ENCODE measurements at regions of chr1 and their contacts with region 1.

Region 1: DNA sequence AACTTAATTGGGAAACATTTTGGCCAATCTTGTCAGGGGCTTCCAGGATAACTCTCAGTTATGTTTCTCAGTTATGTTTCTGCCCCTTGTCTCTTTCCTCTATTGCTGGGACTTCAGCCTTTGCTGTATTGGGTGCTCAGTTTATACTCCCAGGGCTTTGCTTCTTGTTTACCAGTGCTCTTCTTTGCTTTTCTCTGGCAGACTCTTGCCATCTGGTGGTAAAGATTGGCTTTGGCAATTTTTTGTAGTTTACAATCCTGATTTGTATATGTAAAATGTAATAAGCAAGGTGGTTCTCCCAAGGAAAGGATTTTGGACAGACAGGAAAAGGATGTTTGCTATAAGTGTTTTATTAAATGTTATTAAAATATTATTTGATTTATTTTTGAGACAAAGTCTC is 37.9 kb downstream of the FABP3 start:
- DNase-seq: no peak
- H3K4me3 Mint-ChIP-seq: no peak overlapping the region
- H3K27ac Mint-ChIP-seq: no peak overlapping the region
- H3K4me1 Mint-ChIP-seq: peaks cover 5% of the 10 kb centered on the region
- H3K27me3 Mint-ChIP-seq: no peaks in the 10 kb centered on the region

Region 2: DNA sequence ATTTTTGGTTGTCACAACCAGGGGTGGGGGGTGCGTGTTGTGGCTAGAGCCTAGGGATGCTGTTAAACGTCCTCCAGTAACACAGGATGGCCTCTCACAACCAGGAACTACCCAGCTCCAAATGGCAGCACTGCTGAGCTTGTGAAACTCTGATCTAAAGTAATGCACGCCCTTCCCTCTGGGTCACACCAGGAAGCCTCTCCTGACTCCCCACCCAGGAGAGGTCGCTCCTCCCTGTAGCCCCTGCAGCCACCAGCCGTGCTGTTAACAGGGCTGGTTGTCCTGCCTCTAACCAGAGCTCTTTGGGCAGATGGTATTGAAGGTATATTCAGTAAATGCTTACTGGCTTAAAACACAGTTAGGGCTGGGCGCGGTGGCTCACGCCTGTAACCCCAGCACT is 168.5 kb before region 1 on chr1:
- intact Hi-C with region 1: loop called (anchors 1 kb)
- DNase-seq: no peak
- H3K4me3 Mint-ChIP-seq: no peak overlapping the region
- H3K27ac Mint-ChIP-seq: no peak overlapping the region
- H3K4me1 Mint-ChIP-seq: peaks cover 16% of the 10 kb centered on the region
- H3K27me3 Mint-ChIP-seq: peaks cover 1% of the 10 kb centered on the region

Region 3: DNA sequence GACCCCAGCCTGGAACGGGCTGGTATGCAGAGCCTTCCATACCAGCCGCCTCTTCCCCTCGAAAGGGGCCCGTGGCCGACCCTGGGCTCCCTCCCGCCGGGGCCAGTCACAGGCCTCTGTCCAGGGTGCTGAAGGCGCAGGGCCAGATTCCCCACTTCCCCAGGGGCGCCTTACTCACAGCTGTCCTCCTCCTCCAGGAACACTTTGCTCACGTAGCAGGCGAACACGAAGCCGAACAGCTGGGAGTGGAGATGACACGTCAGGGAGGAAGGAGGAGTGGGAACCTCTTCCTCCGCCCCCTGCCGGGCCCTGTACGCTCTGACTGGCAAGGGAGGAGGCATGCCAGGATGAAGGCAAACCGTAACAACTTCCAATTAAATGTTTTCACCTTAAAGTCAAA is 152.7 kb before region 1 on chr1:
- intact Hi-C with region 1: loop called (anchors 1 kb)
- DNase-seq: peak; percentile 37
- H3K4me3 Mint-ChIP-seq: peak overlapping the region; percentile 22
- H3K27ac Mint-ChIP-seq: no peak overlapping the region
- H3K4me1 Mint-ChIP-seq: no peaks in the 10 kb centered on the region
- H3K27me3 Mint-ChIP-seq: peaks cover 22% of the 10 kb centered on the region

Region 4: DNA sequence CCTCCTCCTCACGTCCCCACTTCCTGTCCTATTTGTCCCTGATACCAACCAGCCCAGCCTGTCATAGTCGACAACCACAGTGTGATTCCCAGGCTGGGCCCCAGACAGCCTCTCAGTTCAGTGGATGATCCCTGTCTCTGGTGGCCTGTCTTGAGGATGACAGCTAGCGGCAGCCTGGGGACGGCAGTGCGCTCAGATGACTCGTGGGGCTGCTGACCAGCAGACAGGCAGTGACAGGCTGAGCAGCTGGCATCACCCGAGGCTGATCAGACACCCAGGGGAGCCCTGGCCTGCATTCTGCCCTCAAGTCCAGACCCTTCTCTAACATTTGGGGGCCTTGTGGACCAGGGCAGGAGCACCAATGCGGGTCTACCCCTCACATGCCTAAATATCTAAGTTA is 116.3 kb before region 1 on chr1:
- intact Hi-C with region 1: no loop called
- DNase-seq: no peak
- H3K4me3 Mint-ChIP-seq: no peak overlapping the region
- H3K27ac Mint-ChIP-seq: no peak overlapping the region
- H3K4me1 Mint-ChIP-seq: no peaks in the 10 kb centered on the region
- H3K27me3 Mint-ChIP-seq: peaks cover 2% of the 10 kb centered on the region

Region 5: DNA sequence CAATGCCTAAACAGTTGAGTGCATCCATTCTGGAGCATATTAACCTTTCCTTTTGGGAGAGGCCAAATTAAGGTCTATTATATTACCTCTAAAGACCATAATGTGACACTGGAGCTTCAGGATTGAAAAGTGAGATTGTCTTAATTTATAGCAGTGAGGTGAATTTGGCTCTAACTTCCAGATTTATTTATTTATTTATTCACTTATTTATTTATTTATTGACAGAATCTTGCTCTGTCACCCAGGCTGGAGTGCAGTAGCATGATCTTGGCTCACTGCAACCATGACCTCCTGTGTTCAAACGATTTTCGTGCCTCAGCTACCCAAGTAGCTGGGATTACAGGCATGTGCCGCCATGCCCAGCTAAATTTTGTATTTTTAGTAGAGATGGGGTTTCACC is 19.1 kb before region 1 on chr1:
- intact Hi-C with region 1: no loop called
- DNase-seq: no peak
- H3K4me3 Mint-ChIP-seq: no peak overlapping the region
- H3K27ac Mint-ChIP-seq: no peak overlapping the region
- H3K4me1 Mint-ChIP-seq: no peaks in the 10 kb centered on the region
- H3K27me3 Mint-ChIP-seq: no peaks in the 10 kb centered on the region

Measured in activated T-helper 1 cell treated with anti-CD3 and anti-CD28 coated beads, Interleukin-12 subunit alpha, Interleukin-12 subunit beta, Interleukin-2, Interleukin-4 antibody, amounts not matched to agents 30 ng/mL and 10 ng/mL and 1 ng/mL, durations not matched to agents 14 hours and 24 hours and 36 hours (primary cell).